Activated B cell treated with CpG ODN at 0.5 μM for 24 hours (primary cell): ENCODE measurements at regions of chr3 and their contacts with region 1.

Region 1: DNA sequence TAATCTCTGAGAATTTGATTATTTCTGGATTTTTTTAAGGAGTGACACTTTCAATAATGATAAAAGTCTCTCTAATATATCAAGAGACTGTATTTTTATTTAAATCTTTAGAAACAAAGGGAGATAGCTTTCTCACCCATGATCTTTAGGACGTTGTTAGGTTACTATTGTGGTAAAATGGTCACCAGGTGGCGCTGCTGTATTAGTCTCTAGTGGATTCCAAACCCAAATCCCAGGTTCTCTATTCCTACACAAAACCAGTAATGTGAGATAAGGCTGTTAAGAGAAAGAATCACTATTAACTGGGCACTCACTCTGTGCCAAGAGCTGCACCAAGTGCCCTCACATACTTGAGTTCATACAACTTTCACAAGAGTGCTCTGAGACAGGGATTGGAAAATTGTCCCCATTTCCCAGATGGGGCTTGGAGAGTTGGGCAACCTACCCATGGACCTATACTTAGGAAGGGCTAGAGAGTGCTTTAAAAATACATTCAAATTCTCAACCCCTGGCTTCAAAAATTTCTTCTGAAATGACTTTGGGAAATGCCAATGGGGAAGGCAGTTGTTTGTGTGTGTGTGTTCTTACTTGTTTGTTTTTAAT is 593.4 kb upstream of the TGFBR2 start:
- DNase-seq: no peak
- ATAC-seq: no peak
- H3K4me3 Mint-ChIP-seq: no peak overlapping the region
- H3K27ac Mint-ChIP-seq: no peak overlapping the region
- H3K4me1 Mint-ChIP-seq: no peaks in the 10 kb centered on the region
- H3K27me3 Mint-ChIP-seq: peaks cover 2% of the 10 kb centered on the region
- CTCF ChIP-seq: no peak

Region 2: DNA sequence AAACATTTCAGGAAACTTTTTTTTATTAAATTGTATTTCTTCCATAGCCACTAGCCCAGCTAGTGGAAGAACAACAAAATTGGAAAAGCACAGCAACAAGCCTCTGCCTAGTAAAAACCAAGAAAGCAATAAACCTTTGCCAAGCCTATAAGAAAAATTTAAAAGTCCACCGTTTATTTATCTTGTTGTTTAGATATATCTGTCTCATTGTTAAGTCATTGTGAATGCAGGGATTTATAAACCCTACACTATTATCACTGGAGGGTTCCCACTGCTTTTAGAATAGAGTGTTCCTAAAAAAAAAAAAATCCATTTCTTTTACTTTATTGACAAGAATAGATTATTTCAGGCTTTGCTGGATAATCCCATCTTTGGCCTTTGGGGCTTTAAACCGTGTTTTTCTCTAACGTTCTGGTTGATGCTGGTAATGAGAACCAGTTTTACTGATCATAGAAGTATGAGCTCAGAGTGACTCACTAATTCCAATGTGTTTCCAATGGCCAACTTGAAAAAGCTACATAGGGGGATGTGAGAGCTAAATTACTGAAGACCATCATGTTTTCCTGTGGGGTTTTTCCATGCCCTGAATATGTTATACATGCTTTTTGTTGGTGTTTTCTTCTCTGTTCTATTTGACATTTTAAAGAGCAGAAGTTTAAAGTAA is 98.0 kb before region 1 on chr3:
- CTCF ChIA-PET with region 1: no interaction called
- POLR2A ChIA-PET with region 1: no interaction called
- intact Hi-C with region 1: no loop called
- DNase-seq: no peak
- ATAC-seq: no peak
- H3K4me3 Mint-ChIP-seq: no peak overlapping the region
- H3K27ac Mint-ChIP-seq: no peak overlapping the region
- H3K4me1 Mint-ChIP-seq: no peaks in the 10 kb centered on the region
- H3K27me3 Mint-ChIP-seq: no peaks in the 10 kb centered on the region
- CTCF ChIP-seq: no peak

Region 3: GRCh38 chr3:30751610-30752299 is 738.7 kb after region 1 on chr3:
- CTCF ChIA-PET with region 1: interaction called, 7 read pairs
- POLR2A ChIA-PET with region 1: no interaction called
- intact Hi-C with region 1: loop called (anchors 1 kb)
- DNase-seq: peak; percentile 20
- ATAC-seq: peak; percentile 72
- H3K4me3 Mint-ChIP-seq: no peak overlapping the region
- H3K27ac Mint-ChIP-seq: no peak overlapping the region
- H3K4me1 Mint-ChIP-seq: peaks cover 9% of the 10 kb centered on the region
- H3K27me3 Mint-ChIP-seq: peaks cover 7% of the 10 kb centered on the region
- CTCF ChIP-seq: no peak

Region 4: DNA sequence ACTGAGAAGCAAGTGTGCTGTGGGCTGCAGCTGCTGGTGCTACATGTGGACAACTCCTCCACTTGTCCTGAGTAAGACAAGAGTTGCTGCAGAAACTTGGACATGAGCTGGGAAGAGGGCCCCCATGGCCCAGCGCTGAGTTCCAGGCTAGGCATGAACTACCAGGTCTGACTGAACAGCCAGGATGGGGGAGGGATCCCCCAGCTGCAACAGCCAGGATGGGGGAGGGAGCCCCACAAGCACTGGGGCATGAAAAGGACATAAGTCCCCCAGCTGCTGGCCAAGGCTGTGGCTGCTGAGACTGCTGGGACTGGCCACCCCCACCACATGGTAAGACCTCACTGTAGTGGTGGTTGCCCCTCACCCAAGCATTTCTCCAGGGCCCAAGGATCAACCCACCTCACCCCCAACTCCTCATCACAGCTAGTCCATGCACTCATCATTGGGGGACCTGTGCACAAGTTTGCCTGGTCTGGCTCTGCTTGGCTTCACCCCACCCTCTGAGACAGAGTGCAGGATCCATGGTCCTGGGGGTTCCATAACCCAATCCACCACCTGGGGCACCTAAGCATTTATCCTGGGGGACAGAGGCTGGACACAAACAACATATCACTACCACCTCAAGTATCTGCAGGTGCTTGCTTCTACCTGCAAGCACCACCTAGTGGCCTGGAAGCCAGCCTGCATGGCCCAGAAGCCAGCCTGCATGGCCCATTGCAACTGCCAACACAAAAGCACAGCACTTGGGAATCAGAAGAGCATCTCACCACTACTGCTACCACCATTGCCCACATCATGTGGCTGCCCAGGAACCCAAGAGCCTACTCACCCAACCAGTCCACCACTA is 1435.2 kb after region 1 on chr3:
- CTCF ChIA-PET with region 1: no interaction called
- POLR2A ChIA-PET with region 1: no interaction called
- intact Hi-C with region 1: loop called (anchors 10 kb)
- DNase-seq: no peak
- ATAC-seq: peak; percentile 40
- H3K4me3 Mint-ChIP-seq: no peak overlapping the region
- H3K27ac Mint-ChIP-seq: no peak overlapping the region
- H3K4me1 Mint-ChIP-seq: peaks cover 12% of the 10 kb centered on the region
- H3K27me3 Mint-ChIP-seq: peaks cover 8% of the 10 kb centered on the region
- CTCF ChIP-seq: no peak

Region 5: DNA sequence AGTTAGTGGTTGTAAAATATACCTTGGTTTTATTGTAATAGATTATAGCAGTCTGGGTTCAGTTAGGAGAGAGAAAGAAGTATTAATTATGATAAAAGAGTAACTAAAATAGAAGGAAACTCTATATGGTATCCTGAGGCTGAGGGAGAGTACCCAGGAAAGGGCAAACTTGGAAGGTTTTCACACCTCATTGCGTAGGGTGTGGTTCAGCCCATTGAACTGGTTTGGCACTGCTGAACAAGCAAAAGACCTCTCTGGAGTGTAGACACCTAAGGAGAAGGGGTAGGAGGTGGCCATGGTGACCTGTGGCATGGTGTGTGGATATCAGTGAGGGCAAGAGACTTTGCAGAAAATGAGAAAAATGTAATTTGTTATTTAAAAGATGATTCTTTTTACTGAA is 1583.1 kb after region 1 on chr3:
- CTCF ChIA-PET with region 1: no interaction called
- POLR2A ChIA-PET with region 1: no interaction called
- intact Hi-C with region 1: no loop called
- DNase-seq: no peak
- ATAC-seq: no peak
- H3K4me3 Mint-ChIP-seq: no peak overlapping the region
- H3K27ac Mint-ChIP-seq: no peak overlapping the region
- H3K4me1 Mint-ChIP-seq: peaks cover 10% of the 10 kb centered on the region
- H3K27me3 Mint-ChIP-seq: no peaks in the 10 kb centered on the region
- CTCF ChIP-seq: no peak